ENCODE measurements at regions of chr6 and their contacts with region 1.

Region 1: DNA sequence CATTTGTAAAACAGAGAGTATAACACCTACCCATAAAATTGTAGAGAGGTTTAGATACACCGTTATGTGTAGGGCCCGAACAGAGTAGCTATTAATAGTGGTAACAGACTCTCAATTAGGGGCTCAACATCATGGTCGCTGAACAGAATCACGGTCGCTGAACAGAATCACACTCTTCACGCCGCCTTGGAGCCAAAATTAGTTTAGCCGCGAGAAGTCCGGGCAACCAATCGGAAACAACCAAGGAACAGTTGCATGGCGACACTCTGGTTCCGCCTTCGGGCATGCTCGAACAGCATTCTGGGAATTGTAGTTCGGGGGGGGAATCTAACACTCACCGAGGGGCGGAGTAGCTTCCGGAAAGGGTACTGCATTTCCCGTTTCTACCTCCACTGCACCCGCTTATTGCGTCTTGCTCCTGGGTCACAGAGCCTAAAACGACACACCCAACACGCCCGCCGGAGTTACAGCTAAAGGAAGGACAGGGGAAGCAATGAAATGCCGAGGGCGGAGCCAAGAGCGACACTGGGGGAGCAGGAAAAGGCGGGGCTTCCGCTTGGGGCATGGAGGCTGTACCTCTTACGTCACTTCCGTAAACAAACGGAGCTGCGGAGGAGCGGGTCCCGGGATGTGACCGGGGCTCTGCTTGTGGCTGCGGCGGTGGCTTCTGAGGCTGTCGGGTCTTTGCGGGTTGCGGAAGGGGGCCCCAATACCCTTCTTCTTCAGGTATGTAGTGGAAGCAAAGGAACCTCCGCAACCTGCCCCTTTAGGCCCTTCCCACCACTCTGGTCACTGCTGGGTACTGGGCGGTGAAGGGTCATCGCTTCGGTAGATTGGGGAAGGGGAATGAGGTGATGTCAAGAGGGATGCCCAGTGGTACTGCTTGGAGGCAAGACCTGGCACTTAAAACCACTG is at the start of gene CCDC28A:
- H3K4me3 ChIP-seq: peak within 1 kb of the TSS; percentile 87
- H3K27ac ChIP-seq: peak within 1 kb of the TSS; percentile 88
- H3K4me1 ChIP-seq: no peaks in the 10 kb centered on the region
- CTCF ChIP-seq: no peak

Region 2: GRCh38 chr6:138692058-138692977 is 81.1 kb before region 1 on chr6:
- CTCF ChIA-PET with region 1: interaction called, 6 read pairs
- POLR2A ChIA-PET with region 1: interaction called, 11 read pairs
- H3K4me3 ChIP-seq: peak overlapping the region; percentile 85
- H3K27ac ChIP-seq: peak overlapping the region; percentile 95; the same call in 1 of the 2 replicates
- H3K4me1 ChIP-seq: no peaks in the 10 kb centered on the region
- CTCF ChIP-seq: peak; percentile 81

Region 3: DNA sequence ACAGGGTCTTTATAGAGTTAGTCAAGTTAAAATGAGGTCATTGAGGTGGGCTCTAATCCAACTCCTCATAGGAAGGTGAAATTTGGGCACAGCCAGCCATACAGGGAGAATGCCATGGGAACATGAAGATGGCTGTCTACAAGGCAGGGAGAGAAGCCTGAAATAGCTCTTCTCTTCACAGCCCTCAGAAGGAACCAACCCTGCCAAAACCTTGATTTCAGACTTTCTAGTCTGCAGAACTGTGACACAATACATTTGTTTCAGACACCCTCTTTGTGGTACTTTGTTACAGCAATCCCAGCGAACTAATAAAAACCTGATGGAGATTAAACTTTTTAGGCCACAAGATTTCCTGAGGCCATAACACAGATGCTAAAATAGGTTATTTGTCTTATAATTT is 318.4 kb after region 1 on chr6:
- CTCF ChIA-PET with region 1: no interaction called
- POLR2A ChIA-PET with region 1: no interaction called
- H3K4me3 ChIP-seq: no peak overlapping the region
- H3K27ac ChIP-seq: no peak overlapping the region
- H3K4me1 ChIP-seq: no peaks in the 10 kb centered on the region
- CTCF ChIP-seq: no peak

Region 4: DNA sequence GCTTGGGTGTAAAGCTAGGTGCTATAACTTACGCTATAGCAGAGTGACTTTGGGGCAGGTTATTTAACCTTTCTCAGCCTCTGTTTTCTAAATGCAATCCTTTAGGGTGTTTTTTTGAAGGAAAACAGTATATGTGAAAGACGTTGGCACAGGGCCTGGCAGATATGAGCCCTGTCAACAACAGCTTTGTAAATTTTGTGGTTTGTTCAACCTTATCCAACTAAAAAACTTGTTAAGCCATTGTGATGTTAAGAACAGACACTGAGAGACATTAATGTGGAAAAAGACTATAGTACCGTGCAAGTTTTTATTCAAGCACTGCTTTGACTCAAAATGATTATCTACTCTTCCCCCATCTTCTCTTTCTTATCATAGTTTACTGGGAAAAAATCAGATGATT is 369.7 kb after region 1 on chr6:
- CTCF ChIA-PET with region 1: no interaction called
- POLR2A ChIA-PET with region 1: interaction called, 12 read pairs
- H3K4me3 ChIP-seq: no peak overlapping the region
- H3K27ac ChIP-seq: no peak overlapping the region
- H3K4me1 ChIP-seq: peaks cover 21% of the 10 kb centered on the region
- CTCF ChIP-seq: no peak

Measured in HEK293 (cell line).